Activated CD4-positive, alpha-beta T cell treated with anti-CD3 and anti-CD28 coated beads, Interleukin-2, amount 10 ng/mL, durations not matched to agents 24 days and 14 days (primary cell): ENCODE measurements at regions of chr9 and their contacts with region 1.

Region 1: GRCh38 chr9:69971643-69972449 is 71.8 kb upstream of the MAMDC2 start:
- DNase-seq: peak; percentile 82
- H3K4me3 Mint-ChIP-seq: no peak overlapping the region
- H3K27ac Mint-ChIP-seq: no peak overlapping the region
- H3K4me1 Mint-ChIP-seq: no peaks in the 10 kb centered on the region
- H3K27me3 Mint-ChIP-seq: peaks cover 4% of the 10 kb centered on the region

Region 2: DNA sequence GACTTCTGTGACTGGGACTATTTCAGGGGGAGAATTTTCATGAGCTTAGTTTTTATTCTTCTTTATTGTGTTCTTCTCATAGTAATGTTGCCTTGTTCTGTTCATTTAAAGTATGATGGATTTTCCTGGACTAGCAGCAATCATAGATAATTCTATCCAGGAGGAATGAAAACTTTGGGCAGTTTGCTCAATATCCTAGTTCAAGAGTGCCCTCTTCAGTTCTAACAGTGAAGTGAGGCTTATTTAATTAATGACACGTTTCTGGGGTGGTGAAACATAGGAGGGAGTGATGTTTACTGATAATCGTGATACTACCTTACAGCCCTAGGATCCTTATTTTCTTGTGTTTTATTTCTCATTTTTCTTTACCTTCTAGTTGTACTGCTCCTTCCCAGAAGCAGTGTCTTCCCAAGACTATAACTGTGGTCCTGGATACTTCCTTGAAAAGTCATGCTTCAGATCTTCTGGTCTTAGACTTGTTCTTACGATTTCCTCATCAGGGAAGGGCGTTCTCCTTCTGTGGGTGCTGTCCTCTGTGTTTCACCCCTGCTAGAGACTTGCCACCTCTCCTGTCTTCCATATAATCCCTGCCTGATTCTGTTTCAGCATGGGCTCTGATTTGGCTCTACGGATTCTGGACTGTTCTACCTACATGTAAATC is 93.9 kb before region 1 on chr9:
- intact Hi-C with region 1: no loop called
- DNase-seq: no peak
- H3K4me3 Mint-ChIP-seq: no peak overlapping the region
- H3K27ac Mint-ChIP-seq: no peak overlapping the region
- H3K4me1 Mint-ChIP-seq: no peaks in the 10 kb centered on the region
- H3K27me3 Mint-ChIP-seq: peaks cover 18% of the 10 kb centered on the region

Region 3: GRCh38 chr9:69945671-69946141 is 26.1 kb before region 1 on chr9:
- intact Hi-C with region 1: no loop called
- DNase-seq: no peak
- H3K4me3 Mint-ChIP-seq: no peak overlapping the region
- H3K27ac Mint-ChIP-seq: no peak overlapping the region
- H3K4me1 Mint-ChIP-seq: no peaks in the 10 kb centered on the region
- H3K27me3 Mint-ChIP-seq: peaks cover 8% of the 10 kb centered on the region

Region 4: DNA sequence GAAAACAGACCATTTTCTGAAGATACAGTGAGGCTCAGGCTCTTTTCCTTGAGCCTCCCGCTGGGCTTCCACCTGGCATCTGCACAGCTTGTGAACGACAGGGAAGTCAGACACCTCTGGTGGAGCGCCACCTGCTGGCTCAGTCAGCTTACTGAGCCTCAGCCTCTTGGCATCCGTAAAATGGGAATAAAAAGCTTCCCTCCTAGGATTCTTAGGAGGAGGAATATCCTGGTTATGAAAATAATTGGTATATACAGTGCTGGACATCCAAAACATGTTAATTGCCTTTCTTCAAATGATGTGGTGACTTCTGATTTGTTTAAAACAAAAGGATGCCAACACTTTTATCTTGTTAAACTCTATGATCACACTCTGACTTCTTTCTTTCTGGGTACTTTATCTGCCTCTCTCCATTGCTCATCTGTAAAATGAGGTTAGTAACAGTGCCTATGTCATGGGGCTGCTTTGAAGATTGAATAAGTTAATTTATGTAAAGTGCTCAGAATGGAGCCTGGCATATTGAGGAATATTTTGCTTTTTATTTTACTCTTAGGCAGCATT is 139.3 kb after region 1 on chr9:
- intact Hi-C with region 1: loop called (anchors 2 kb)
- DNase-seq: peak; percentile 85
- H3K4me3 Mint-ChIP-seq: no peak overlapping the region
- H3K27ac Mint-ChIP-seq: no peak overlapping the region
- H3K4me1 Mint-ChIP-seq: peaks cover 3% of the 10 kb centered on the region
- H3K27me3 Mint-ChIP-seq: peaks cover 9% of the 10 kb centered on the region